MCF 10A (cell line): ENCODE measurements at regions of chr1 and their contacts with region 1.

Region 1: DNA sequence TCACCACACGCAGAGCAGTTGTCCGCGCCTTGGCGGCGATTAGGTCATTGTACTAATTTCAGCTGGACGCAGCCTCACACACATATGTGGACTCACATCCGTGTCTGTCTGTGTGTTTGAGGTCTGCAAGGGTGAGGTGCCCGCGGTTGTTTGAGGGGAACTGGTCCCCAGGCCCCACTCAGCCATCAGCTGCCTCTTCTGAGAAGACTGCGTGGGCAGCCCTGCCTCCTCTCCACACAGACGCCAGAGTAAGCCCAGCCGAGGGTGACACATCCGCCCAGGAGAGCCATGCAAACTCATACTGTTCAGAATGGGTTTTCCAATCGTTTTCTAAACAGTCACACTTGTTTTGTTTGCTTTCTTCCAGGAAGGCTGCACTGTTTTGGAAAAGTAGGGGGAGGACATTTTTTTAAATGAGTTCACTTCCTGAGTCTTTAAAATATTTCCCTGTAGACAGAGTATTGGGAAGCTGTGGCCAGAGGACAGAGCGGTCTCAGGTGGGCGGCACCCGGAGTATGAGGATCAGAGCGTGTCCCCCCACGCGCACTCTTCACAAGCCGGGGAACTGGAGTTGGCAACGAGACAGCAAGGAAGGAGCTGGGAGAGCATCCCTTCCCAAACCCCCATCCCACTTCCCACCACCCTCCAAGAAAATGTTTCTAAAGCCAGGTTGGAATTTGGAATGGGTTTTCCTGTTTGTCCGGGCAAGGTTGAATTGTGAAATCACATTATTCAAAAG is 53.3 kb downstream of the TOMM20 start:
- DNase-seq: peak; percentile 92
- H3K4me3 Mint-ChIP-seq: no peak overlapping the region
- H3K27ac Mint-ChIP-seq: peak overlapping the region; percentile 52
- H3K4me1 Mint-ChIP-seq: peaks cover 30% of the 10 kb centered on the region
- H3K27me3 Mint-ChIP-seq: no peaks in the 10 kb centered on the region
- CTCF ChIP-seq: no peak

Region 2: GRCh38 chr1:234486498-234487448 is 588.6 kb before region 1 on chr1:
- CTCF ChIA-PET with region 1: interaction called, 17 read pairs
- POLR2A ChIA-PET with region 1: no interaction called
- intact Hi-C with region 1: no loop called
- DNase-seq: peak; percentile 87
- H3K4me3 Mint-ChIP-seq: no peak overlapping the region
- H3K27ac Mint-ChIP-seq: no peak overlapping the region
- H3K4me1 Mint-ChIP-seq: peaks cover 15% of the 10 kb centered on the region
- H3K27me3 Mint-ChIP-seq: peaks cover 20% of the 10 kb centered on the region
- CTCF ChIP-seq: peak; percentile 96

Region 3: GRCh38 chr1:234772345-234773147 is 302.8 kb before region 1 on chr1:
- CTCF ChIA-PET with region 1: no interaction called
- POLR2A ChIA-PET with region 1: interaction called, 4 read pairs
- intact Hi-C with region 1: loop called (anchors 5 kb)
- DNase-seq: peak; percentile 100
- H3K4me3 Mint-ChIP-seq: peak overlapping the region; percentile 51
- H3K27ac Mint-ChIP-seq: peak overlapping the region; percentile 95
- H3K4me1 Mint-ChIP-seq: peaks cover 29% of the 10 kb centered on the region
- H3K27me3 Mint-ChIP-seq: no peaks in the 10 kb centered on the region
- CTCF ChIP-seq: no peak

Region 4: GRCh38 chr1:234862944-234863515 is 212.3 kb before region 1 on chr1:
- CTCF ChIA-PET with region 1: interaction called, 3 read pairs
- POLR2A ChIA-PET with region 1: no interaction called
- intact Hi-C with region 1: loop called (anchors 5 kb)
- DNase-seq: peak; percentile 40
- H3K4me3 Mint-ChIP-seq: no peak overlapping the region
- H3K27ac Mint-ChIP-seq: no peak overlapping the region
- H3K4me1 Mint-ChIP-seq: peaks cover 42% of the 10 kb centered on the region
- H3K27me3 Mint-ChIP-seq: no peaks in the 10 kb centered on the region
- CTCF ChIP-seq: no peak

Region 5: DNA sequence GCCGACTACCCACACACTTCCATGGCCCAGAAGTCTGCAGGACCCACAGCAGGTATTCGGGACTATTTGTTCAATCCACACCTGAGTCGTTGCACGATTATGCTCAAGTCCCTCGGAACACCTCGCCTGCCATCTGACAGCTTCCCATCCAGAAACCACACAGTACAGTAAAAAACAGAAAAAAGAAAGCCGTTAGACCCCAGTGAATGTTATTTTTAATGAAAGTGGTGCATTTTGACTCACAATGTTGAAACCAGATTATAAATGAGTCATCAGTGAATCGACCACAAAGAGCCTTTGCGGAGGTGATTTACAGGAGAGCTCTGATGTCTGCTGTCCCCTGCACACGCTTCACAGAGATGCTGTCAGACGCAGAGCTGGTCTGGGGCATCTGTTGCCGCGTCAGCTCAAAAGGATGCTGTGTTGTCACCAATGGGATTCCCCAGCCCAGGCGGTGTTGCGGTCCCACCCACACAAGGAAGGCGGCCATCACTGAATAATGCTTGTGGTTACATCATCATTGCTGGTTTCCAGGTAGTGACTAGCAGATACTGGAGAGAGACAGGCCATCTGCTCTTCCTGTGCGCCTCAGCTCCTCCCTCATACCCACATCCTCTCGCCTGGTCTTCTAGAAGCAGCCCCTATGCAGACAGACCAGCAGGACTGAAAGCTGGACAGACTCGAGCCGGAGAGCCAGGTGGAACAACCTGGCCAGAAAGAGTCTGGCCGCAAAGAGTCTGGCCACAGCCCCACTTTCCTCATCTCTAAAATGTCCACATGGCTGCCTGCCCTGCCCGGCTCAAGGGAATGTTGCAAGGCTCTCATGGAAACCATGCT is 63.5 kb before region 1 on chr1:
- CTCF ChIA-PET with region 1: no interaction called
- POLR2A ChIA-PET with region 1: interaction called, 46 read pairs
- intact Hi-C with region 1: no loop called
- DNase-seq: peak; percentile 99
- H3K4me3 Mint-ChIP-seq: peak overlapping the region; percentile 47
- H3K27ac Mint-ChIP-seq: peak overlapping the region; percentile 92
- H3K4me1 Mint-ChIP-seq: peaks cover 14% of the 10 kb centered on the region
- H3K27me3 Mint-ChIP-seq: no peaks in the 10 kb centered on the region
- CTCF ChIP-seq: no peak

Region 6: DNA sequence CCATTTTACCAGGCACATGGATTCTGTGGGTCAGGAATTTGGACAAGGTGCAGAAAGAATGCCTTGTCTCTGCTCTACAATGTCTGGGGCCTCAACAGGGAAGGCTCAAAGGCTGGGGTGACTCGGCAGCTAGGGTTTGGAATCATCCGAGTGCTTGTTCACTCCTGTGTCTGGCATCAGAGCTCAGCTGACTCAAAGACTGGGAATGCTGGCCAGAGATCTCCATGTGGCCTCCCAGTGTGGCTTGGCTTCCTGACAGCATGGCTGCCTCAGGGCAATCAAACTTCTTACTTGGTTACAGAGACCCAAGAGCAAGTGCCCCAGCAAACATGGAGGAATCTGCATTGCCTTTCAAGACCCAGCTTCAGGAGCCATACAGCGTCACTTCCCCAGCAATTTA is 57.2 kb before region 1 on chr1:
- CTCF ChIA-PET with region 1: interaction called, 4 read pairs
- POLR2A ChIA-PET with region 1: interaction called, 46 read pairs
- intact Hi-C with region 1: no loop called
- DNase-seq: peak; percentile 100
- H3K4me3 Mint-ChIP-seq: no peak overlapping the region
- H3K27ac Mint-ChIP-seq: peak overlapping the region; percentile 0
- H3K4me1 Mint-ChIP-seq: peaks cover 25% of the 10 kb centered on the region
- H3K27me3 Mint-ChIP-seq: no peaks in the 10 kb centered on the region
- CTCF ChIP-seq: no peak

Region 7: DNA sequence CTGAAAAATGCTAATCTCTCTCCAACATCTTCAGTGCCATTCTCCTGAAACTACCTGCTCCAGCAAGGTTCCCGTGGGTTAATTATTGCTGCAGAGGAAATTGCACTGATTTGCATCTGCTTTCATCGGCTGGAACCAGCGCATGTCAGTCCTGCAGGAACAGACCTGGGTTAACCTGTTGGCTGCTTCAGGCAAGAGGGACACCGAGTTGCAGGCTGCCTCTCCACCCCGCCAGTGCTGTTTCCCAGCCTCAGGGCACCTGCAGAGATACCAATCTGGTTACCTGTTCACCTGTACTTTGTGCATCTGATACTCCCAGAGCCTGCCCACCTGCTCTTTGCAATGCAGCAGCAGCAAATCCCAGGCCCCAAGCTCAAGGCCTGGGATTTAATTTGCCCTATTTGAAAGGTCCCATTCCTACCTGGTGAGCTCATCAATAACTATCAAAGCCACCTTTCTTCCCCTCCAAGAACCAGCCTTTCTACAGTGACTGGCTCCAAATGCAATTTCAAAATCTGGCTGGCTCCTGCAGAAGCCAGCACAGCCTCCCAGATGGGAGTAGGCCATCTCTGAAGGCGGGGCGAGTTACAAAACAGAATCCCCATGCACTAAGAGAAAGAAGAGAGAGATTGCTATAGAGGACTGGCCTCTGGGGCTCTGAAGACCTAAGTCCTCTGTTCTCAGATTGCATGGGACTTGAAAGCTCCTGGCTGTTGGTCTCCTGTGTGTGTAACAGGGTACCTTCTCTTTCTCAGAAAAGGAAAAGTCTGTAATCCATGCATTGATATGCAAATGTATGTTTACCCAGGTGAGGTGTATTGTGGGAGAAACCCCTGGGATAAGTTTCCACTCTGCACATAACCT is 14.5 kb before region 1 on chr1:
- CTCF ChIA-PET with region 1: interaction called, 15 read pairs
- POLR2A ChIA-PET with region 1: interaction called, 49 read pairs
- intact Hi-C with region 1: no loop called
- DNase-seq: peak; percentile 76
- H3K4me3 Mint-ChIP-seq: no peak overlapping the region
- H3K27ac Mint-ChIP-seq: no peak overlapping the region
- H3K4me1 Mint-ChIP-seq: peaks cover 38% of the 10 kb centered on the region
- H3K27me3 Mint-ChIP-seq: no peaks in the 10 kb centered on the region
- CTCF ChIP-seq: no peak

Region 8: DNA sequence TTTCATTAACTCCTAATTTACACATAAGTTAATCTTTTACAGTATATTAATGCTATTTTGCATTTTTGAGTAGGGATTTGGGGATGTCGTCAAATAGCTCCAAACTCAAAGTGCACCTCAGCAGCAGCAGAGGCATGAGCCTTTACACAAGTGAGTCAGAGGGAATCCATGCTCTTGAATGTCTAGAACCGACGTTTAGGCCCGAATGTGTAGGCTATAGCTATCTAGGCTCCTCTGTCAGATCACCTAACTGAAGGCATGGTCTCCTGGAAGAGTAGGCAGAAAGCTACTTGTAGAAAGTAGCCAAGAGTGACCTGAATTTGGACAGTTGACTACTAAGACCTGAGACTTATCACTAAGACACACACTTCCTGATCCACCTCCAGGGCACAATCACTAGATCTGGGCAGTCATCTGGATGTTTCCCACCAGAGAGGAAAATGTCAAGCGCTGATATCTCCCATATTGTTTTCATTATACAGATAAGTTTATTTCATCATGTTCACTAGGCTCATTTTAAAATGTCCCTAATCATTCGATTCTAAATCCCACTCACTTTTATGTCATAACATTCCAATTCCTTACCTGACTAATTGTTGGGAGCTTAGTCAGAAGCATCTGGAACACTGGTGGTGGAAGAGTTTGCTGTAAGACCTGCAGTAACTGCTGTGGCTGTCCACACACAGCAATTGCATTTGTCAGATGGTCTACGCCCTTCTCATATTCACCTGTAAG is 38.0 kb after region 1 on chr1:
- CTCF ChIA-PET with region 1: no interaction called
- POLR2A ChIA-PET with region 1: no interaction called
- intact Hi-C with region 1: no loop called
- DNase-seq: no peak
- H3K4me3 Mint-ChIP-seq: no peak overlapping the region
- H3K27ac Mint-ChIP-seq: no peak overlapping the region
- H3K4me1 Mint-ChIP-seq: peaks cover 17% of the 10 kb centered on the region
- H3K27me3 Mint-ChIP-seq: no peaks in the 10 kb centered on the region
- CTCF ChIP-seq: no peak